ENCODE measurements at regions of chr12 and their contacts with region 1.

Region 1: GRCh38 chr12:104108755-104109445 is 29.1 kb downstream of the NFYB start:
- DNase-seq: peak; percentile 95
- H3K4me3 Mint-ChIP-seq: no peak overlapping the region
- H3K27ac Mint-ChIP-seq: no peak overlapping the region
- H3K4me1 Mint-ChIP-seq: peaks cover 2% of the 10 kb centered on the region
- H3K27me3 Mint-ChIP-seq: no peaks in the 10 kb centered on the region

Region 2: DNA sequence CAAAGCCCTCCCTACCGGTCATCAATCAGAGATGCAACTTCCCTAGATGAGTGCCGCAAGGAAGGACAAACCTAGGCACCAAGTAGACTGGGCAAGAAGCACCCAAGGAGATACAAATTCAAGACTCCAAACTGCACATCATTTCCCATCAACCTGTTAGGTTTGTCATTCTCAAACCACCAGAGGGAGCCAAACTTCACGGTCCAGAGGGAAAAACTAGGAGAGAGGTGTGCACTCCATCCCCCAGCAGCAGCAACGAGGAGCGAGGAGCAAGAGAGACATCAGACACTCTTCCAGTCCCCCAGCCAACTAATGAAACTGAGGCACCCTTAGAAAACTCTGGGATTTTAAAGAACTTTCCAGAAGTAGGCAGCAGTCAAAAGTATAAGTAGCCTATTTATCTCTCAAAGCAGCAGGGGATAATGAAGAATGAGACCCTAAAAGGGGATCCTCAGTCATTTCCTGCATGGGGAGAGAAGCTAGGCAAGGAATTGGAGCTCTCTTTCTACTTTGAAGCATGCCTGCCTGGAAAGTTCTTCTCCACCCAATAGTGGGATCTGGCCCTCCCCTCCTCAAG is 230.9 kb before region 1 on chr12:
- intact Hi-C with region 1: loop called (anchors 1 kb)
- DNase-seq: peak; percentile 88
- H3K4me3 Mint-ChIP-seq: no peak overlapping the region
- H3K27ac Mint-ChIP-seq: no peak overlapping the region
- H3K4me1 Mint-ChIP-seq: peaks cover 29% of the 10 kb centered on the region
- H3K27me3 Mint-ChIP-seq: peaks cover 12% of the 10 kb centered on the region

Region 3: GRCh38 chr12:104057771-104058197 is 51.1 kb before region 1 on chr12:
- intact Hi-C with region 1: loop called (anchors 1 kb)
- DNase-seq: peak; percentile 65
- H3K4me3 Mint-ChIP-seq: no peak overlapping the region
- H3K27ac Mint-ChIP-seq: no peak overlapping the region
- H3K4me1 Mint-ChIP-seq: peaks cover 6% of the 10 kb centered on the region
- H3K27me3 Mint-ChIP-seq: peaks cover 71% of the 10 kb centered on the region